CD8-positive, alpha-beta T cell (primary cell): ENCODE measurements at regions of chr14 and their contacts with region 1.

Region 1: GRCh38 chr14:98138666-98139065 is 1133.3 kb downstream of the BCL11B start:
- DNase-seq: peak; percentile 34 to 88 (median 72)
- ATAC-seq: peak; percentile 52
- H3K4me3 ChIP-seq: peak overlapping the region; percentile 2 to 56
- H3K4me3 Mint-ChIP-seq: peak overlapping the region; percentile 89
- H3K27ac ChIP-seq: peak overlapping the region; percentile 45 to 50
- H3K27ac Mint-ChIP-seq: peak overlapping the region; percentile 92
- H3K4me1 ChIP-seq: peaks cover 88% of the 10 kb centered on the region
- H3K4me1 Mint-ChIP-seq: peaks cover 91% of the 10 kb centered on the region
- H3K27me3 ChIP-seq: no peaks in the 10 kb centered on the region
- H3K27me3 Mint-ChIP-seq: no peaks in the 10 kb centered on the region
- CTCF ChIP-seq: peak; percentile 82

Region 2: DNA sequence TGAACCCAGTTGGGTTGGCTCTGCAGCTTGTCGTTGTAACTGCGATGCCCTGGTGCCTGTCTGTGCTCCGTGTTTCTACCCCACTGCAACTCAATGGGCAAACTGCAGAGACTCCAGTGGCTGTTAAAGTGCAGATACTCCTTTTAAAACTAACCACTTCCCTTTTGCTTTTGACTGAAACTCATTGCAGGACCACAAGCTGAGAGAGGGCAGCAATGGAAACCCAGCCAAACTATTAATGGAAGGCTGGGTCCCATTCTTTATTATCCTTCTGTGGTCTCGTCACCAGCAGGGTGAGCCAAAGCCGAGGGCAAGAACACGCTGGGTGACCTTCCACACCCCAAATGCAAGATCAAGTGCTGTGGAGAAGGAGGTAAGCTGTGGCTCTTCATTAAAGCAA is 431.1 kb before region 1 on chr14:
- CTCF ChIA-PET with region 1: interaction called, 4 read pairs
- POLR2A ChIA-PET with region 1: no interaction called
- intact Hi-C with region 1: loop called in 1 of 2 experiments (anchors 10 kb)
- DNase-seq: peak in 6 of 9 experiments; percentile 26 to 68 (median 50)
- ATAC-seq: peak; percentile 13
- H3K4me3 ChIP-seq: peak overlapping the region; percentile 6 to 16
- H3K4me3 Mint-ChIP-seq: peak overlapping the region; percentile 63
- H3K27ac ChIP-seq: peak overlapping the region in 1 of 2 experiments; percentile 63
- H3K27ac Mint-ChIP-seq: peak overlapping the region; percentile 78
- H3K4me1 ChIP-seq: peaks cover 84% of the 10 kb centered on the region
- H3K4me1 Mint-ChIP-seq: peaks cover 97% of the 10 kb centered on the region
- H3K27me3 ChIP-seq: no peaks in the 10 kb centered on the region
- H3K27me3 Mint-ChIP-seq: no peaks in the 10 kb centered on the region
- CTCF ChIP-seq: no peak

Region 3: DNA sequence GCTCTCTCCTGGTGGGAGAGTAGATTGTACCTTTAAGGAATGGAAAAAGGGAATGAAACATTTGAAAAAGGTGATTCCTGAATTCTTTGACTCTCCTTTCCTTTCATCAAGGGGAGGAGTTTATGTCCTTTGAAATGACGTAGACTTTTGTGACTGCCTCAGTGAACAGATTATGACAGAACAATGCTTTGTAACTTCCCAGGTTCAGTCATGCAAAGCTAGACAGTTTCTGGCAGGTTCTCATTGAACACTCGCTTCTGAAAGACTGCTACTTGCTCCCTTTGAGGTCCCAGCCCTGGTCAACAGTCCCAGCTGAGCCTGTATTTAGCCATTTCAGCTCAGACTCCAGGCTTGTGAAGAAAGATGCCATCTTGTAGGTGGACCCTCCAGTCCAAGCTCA is 45.6 kb before region 1 on chr14:
- CTCF ChIA-PET with region 1: no interaction called
- POLR2A ChIA-PET with region 1: no interaction called
- intact Hi-C with region 1: no loop called
- DNase-seq: no peak
- ATAC-seq: no peak
- H3K4me3 ChIP-seq: no peak overlapping the region
- H3K4me3 Mint-ChIP-seq: no peak overlapping the region
- H3K27ac ChIP-seq: no peak overlapping the region
- H3K27ac Mint-ChIP-seq: no peak overlapping the region
- H3K4me1 ChIP-seq: no peaks in the 10 kb centered on the region
- H3K4me1 Mint-ChIP-seq: peaks cover 7% of the 10 kb centered on the region
- H3K27me3 ChIP-seq: no peaks in the 10 kb centered on the region
- H3K27me3 Mint-ChIP-seq: no peaks in the 10 kb centered on the region
- CTCF ChIP-seq: no peak

Region 4: GRCh38 chr14:98167705-98168104 is 29.0 kb after region 1 on chr14:
- CTCF ChIA-PET with region 1: interaction called, 76 read pairs
- POLR2A ChIA-PET with region 1: interaction called, 26 read pairs
- intact Hi-C with region 1: no loop called
- DNase-seq: peak in 5 of 9 experiments; percentile 42 to 69 (median 43)
- ATAC-seq: peak; percentile 17
- H3K4me3 ChIP-seq: peak overlapping the region; percentile 13 to 18
- H3K4me3 Mint-ChIP-seq: peak overlapping the region; percentile 64
- H3K27ac ChIP-seq: peak overlapping the region; percentile 39 to 56
- H3K27ac Mint-ChIP-seq: peak overlapping the region; percentile 99
- H3K4me1 ChIP-seq: peaks cover 80% of the 10 kb centered on the region
- H3K4me1 Mint-ChIP-seq: peaks cover 95% of the 10 kb centered on the region
- H3K27me3 ChIP-seq: no peaks in the 10 kb centered on the region
- H3K27me3 Mint-ChIP-seq: no peaks in the 10 kb centered on the region
- CTCF ChIP-seq: no peak

Region 5: DNA sequence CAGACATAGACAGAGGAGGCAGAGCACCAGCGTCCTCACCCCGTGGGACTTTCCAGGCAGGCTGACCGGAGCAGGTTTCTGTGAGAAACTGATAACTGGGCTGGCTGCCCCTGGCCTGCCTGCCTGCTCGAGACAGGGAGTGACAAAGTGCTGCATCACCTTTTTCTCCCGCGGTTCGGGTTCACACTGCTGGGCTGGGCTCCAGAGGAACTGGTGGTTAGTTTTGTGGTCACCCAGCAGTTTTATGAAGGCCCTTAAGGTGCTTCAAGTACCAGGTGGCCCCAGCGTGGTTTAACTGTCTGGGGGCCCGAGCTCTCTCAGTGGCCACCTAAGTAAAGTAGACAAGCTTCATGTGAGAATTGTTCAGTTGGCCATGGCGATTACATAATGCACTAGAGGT is 59.7 kb after region 1 on chr14:
- CTCF ChIA-PET with region 1: interaction called, 283 read pairs
- POLR2A ChIA-PET with region 1: interaction called, 105 read pairs
- intact Hi-C with region 1: no loop called
- DNase-seq: peak in 7 of 9 experiments; percentile 35 to 79 (median 60)
- ATAC-seq: peak; percentile 42
- H3K4me3 ChIP-seq: peak overlapping the region in 1 of 2 experiments; percentile 12
- H3K4me3 Mint-ChIP-seq: peak overlapping the region; percentile 54
- H3K27ac ChIP-seq: peak overlapping the region in 1 of 2 experiments; percentile 51
- H3K27ac Mint-ChIP-seq: peak overlapping the region; percentile 85
- H3K4me1 ChIP-seq: peaks cover 68% of the 10 kb centered on the region
- H3K4me1 Mint-ChIP-seq: peaks cover 93% of the 10 kb centered on the region
- H3K27me3 ChIP-seq: no peaks in the 10 kb centered on the region
- H3K27me3 Mint-ChIP-seq: no peaks in the 10 kb centered on the region
- CTCF ChIP-seq: no peak

Region 6: GRCh38 chr14:98323836-98324235 is 185.2 kb after region 1 on chr14:
- CTCF ChIA-PET with region 1: no interaction called
- POLR2A ChIA-PET with region 1: no interaction called
- intact Hi-C with region 1: loop called in 1 of 2 experiments (anchors 5 kb)
- DNase-seq: no peak
- ATAC-seq: no peak
- H3K4me3 ChIP-seq: no peak overlapping the region
- H3K4me3 Mint-ChIP-seq: no peak overlapping the region
- H3K27ac ChIP-seq: no peak overlapping the region
- H3K27ac Mint-ChIP-seq: peak overlapping the region; percentile 18
- H3K4me1 ChIP-seq: peaks cover 14% of the 10 kb centered on the region
- H3K4me1 Mint-ChIP-seq: peaks cover 24% of the 10 kb centered on the region
- H3K27me3 ChIP-seq: no peaks in the 10 kb centered on the region
- H3K27me3 Mint-ChIP-seq: no peaks in the 10 kb centered on the region
- CTCF ChIP-seq: no peak

Region 7: GRCh38 chr14:98364961-98365360 is 226.3 kb after region 1 on chr14:
- CTCF ChIA-PET with region 1: no interaction called
- POLR2A ChIA-PET with region 1: no interaction called
- intact Hi-C with region 1: no loop called
- DNase-seq: no peak
- ATAC-seq: no peak
- H3K4me3 ChIP-seq: no peak overlapping the region
- H3K4me3 Mint-ChIP-seq: no peak overlapping the region
- H3K27ac ChIP-seq: no peak overlapping the region
- H3K27ac Mint-ChIP-seq: no peak overlapping the region
- H3K4me1 ChIP-seq: peaks cover 15% of the 10 kb centered on the region
- H3K4me1 Mint-ChIP-seq: peaks cover 23% of the 10 kb centered on the region
- H3K27me3 ChIP-seq: no peaks in the 10 kb centered on the region
- H3K27me3 Mint-ChIP-seq: no peaks in the 10 kb centered on the region
- CTCF ChIP-seq: no peak

Region 8: DNA sequence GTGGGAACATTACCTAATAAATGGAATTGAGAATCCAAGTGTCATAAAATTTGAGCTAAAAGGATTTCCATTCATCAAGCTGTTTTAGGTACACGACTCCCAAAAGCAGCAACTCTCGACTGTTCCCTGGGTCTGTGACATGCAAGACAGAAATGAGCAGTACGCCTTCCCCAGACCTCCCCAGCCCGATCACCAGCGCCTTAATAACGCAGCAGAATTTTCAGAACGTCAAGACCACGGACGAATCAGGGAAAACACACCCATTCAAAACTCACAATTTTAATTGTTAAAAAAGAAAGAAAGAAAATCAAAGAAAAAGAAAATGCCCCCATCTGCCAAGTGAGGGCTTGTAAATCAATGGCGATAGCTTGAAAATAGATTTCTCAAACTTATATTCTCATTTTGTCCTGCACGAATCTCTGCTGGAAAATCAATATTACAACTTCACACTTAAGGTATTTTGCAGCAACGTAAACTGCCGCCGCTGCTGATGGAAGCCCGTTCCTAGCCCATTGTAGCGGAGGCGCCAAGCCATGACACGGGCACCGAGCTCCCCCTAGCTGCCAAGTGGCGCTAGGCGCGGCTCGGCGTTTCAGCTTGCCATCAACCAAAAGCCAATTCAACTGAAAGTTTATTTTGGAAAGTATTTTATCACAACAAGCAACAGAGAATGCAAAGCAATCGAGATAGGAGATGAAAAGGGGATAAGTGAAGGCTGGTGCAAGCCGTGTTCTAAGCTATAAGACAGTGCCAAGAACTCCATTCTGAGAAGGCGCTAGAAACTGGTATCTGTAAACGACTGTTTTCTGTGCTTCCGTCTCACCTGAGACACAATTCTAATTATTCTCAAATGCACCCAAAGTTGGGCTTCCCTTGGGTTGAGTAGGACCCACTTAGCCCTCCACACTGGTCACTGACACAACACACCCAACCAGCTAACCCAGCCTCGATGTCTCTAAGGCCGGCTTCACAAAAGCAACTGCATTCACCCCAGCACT is 1127.8 kb after region 1 on chr14:
- CTCF ChIA-PET with region 1: interaction called, 85 read pairs
- POLR2A ChIA-PET with region 1: interaction called, 29 read pairs
- intact Hi-C with region 1: loop called in 1 of 2 experiments (anchors 1 kb)
- DNase-seq: peak; percentile 85 to 93 (median 91)
- ATAC-seq: peak; percentile 24
- H3K4me3 ChIP-seq: peak overlapping the region; percentile 87 to 88
- H3K4me3 Mint-ChIP-seq: peak overlapping the region; percentile 100
- H3K27ac ChIP-seq: peak overlapping the region; percentile 96 to 97
- H3K27ac Mint-ChIP-seq: peak overlapping the region; percentile 100
- H3K4me1 ChIP-seq: peaks cover 40% of the 10 kb centered on the region
- H3K4me1 Mint-ChIP-seq: peaks cover 64% of the 10 kb centered on the region
- H3K27me3 ChIP-seq: no peaks in the 10 kb centered on the region
- H3K27me3 Mint-ChIP-seq: no peaks in the 10 kb centered on the region
- CTCF ChIP-seq: peak; percentile 99